HCT116 (cell line): ENCODE measurements at regions of chr1 and their contacts with region 1.

Region 1: GRCh38 chr1:226062558-226063223 is at the start of gene H3-3A:
- DNase-seq: peak; percentile 79
- ATAC-seq: peak; percentile 79
- H3K4me3 ChIP-seq: peak within 1 kb of the TSS; percentile 80 to 88
- H3K27ac ChIP-seq: peak within 1 kb of the TSS; percentile 83
- H3K4me1 ChIP-seq: peaks cover 6 to 19% of the 10 kb centered on the region in 2 experiments; a peak in 3 of 4 replicates
- H3K27me3 ChIP-seq: no peaks in the 10 kb centered on the region
- CTCF ChIP-seq: no peak
- POLR2A ChIP-seq: peak; percentile 58
- RAD21 ChIP-seq: no peak
- total RNA-seq, gene H3-3A: 386 TPM

Region 2: GRCh38 chr1:225987491-225988316 is 75.0 kb before region 1 on chr1:
- CTCF ChIA-PET with region 1: interaction called, 24 read pairs
- POLR2A ChIA-PET with region 1: no interaction called
- RAD21 ChIA-PET with region 1: interaction called in 1 of 2 experiments, 3 read pairs
- intact Hi-C with region 1: no loop called
- DNase-seq: peak; percentile 44
- ATAC-seq: no peak
- H3K4me3 ChIP-seq: no peak overlapping the region
- H3K27ac ChIP-seq: no peak overlapping the region
- H3K4me1 ChIP-seq: no peaks in the 10 kb centered on the region
- H3K27me3 ChIP-seq: no peaks in the 10 kb centered on the region
- CTCF ChIP-seq: peak; percentile 63 to 81 (median 66)
- POLR2A ChIP-seq: no peak
- RAD21 ChIP-seq: peak; percentile 50

Region 3: GRCh38 chr1:226074046-226074445 is 11.4 kb after region 1 on chr1:
- CTCF ChIA-PET with region 1: interaction called, 39 read pairs
- POLR2A ChIA-PET with region 1: interaction called, 5 read pairs
- RAD21 ChIA-PET with region 1: no interaction called
- intact Hi-C with region 1: no loop called
- DNase-seq: no peak
- ATAC-seq: no peak
- H3K4me3 ChIP-seq: no peak overlapping the region
- H3K27ac ChIP-seq: no peak overlapping the region
- H3K4me1 ChIP-seq: no peaks in the 10 kb centered on the region
- H3K27me3 ChIP-seq: no peaks in the 10 kb centered on the region
- CTCF ChIP-seq: no peak
- POLR2A ChIP-seq: no peak
- RAD21 ChIP-seq: no peak

Region 4: GRCh38 chr1:226121587-226122400 is 59.1 kb after region 1 on chr1:
- CTCF ChIA-PET with region 1: interaction called, 21 read pairs
- POLR2A ChIA-PET with region 1: interaction called, 9 read pairs
- RAD21 ChIA-PET with region 1: interaction called, 7 read pairs
- intact Hi-C with region 1: loop called (anchors 1 kb)
- DNase-seq: no peak
- ATAC-seq: peak; percentile 72
- H3K4me3 ChIP-seq: peak overlapping the region; percentile 51 to 59
- H3K27ac ChIP-seq: peak overlapping the region; percentile 95
- H3K4me1 ChIP-seq: peaks cover 31 to 47% of the 10 kb centered on the region in 2 experiments
- H3K27me3 ChIP-seq: no peaks in the 10 kb centered on the region
- CTCF ChIP-seq: peak in 2 of 3 experiments; percentile 56 to 57; a peak in 4 of 6 replicates
- POLR2A ChIP-seq: no peak
- RAD21 ChIP-seq: no peak

Region 5: GRCh38 chr1:226308723-226309315 is 246.1 kb after region 1 on chr1 and contains the start of gene LIN9:
- CTCF ChIA-PET with region 1: no interaction called
- POLR2A ChIA-PET with region 1: no interaction called
- RAD21 ChIA-PET with region 1: no interaction called
- intact Hi-C with region 1: no loop called
- DNase-seq: peak; percentile 74
- ATAC-seq: peak; percentile 84
- H3K4me3 ChIP-seq: peak within 1 kb of the TSS; percentile 94 to 95
- H3K27ac ChIP-seq: peak within 1 kb of the TSS; percentile 89
- H3K4me1 ChIP-seq: peaks cover 14 to 26% of the 10 kb centered on the region in 2 experiments
- H3K27me3 ChIP-seq: no peaks in the 10 kb centered on the region
- CTCF ChIP-seq: no peak
- POLR2A ChIP-seq: peak; percentile 82
- RAD21 ChIP-seq: no peak
- total RNA-seq, gene LIN9: 9.3 TPM